PC-9 (cell line): ENCODE measurements at regions of chr21 and their contacts with region 1.

Region 1: GRCh38 chr21:39349211-39350093 is 564 bp upstream of the HMGN1 start:
- DNase-seq: peak; percentile 89 to 96
- H3K4me3 ChIP-seq: peak overlapping the region; percentile 72
- H3K27ac ChIP-seq: peak overlapping the region; percentile 85
- H3K4me1 ChIP-seq: peaks cover 32% of the 10 kb centered on the region
- H3K27me3 ChIP-seq: no peaks in the 10 kb centered on the region
- CTCF ChIP-seq: no peak

Region 2: GRCh38 chr21:39263372-39263771 is 86.1 kb before region 1 on chr21:
- CTCF ChIA-PET with region 1: no interaction called
- POLR2A ChIA-PET with region 1: no interaction called
- intact Hi-C with region 1: no loop called
- DNase-seq: no peak
- H3K4me3 ChIP-seq: no peak overlapping the region
- H3K27ac ChIP-seq: peak overlapping the region; percentile 34; the same call in 1 of the 2 replicates
- H3K4me1 ChIP-seq: no peaks in the 10 kb centered on the region
- H3K27me3 ChIP-seq: no peaks in the 10 kb centered on the region
- CTCF ChIP-seq: no peak

Region 3: DNA sequence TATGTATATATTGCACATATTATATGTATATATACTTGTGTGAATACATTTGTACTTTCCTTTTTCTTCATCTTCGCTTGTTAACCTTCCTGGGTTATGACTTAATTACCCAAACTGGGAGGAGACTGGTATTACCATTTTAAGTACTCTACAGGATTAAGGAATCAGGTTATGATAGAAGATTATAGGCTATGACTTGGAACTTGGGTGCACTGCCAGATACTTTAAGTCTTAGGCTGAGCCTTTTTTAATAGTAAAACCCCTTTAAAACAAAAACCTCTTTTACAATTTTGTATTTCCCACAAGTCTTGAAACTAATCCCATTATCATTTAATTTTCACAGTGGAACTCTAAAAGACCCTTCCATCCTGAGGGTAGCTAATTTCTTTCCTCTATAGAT is 42.0 kb before region 1 on chr21:
- CTCF ChIA-PET with region 1: no interaction called
- POLR2A ChIA-PET with region 1: interaction called, 25 read pairs
- intact Hi-C with region 1: loop called (anchors 1 kb)
- DNase-seq: no peak
- H3K4me3 ChIP-seq: no peak overlapping the region
- H3K27ac ChIP-seq: no peak overlapping the region
- H3K4me1 ChIP-seq: peaks cover 9% of the 10 kb centered on the region
- H3K27me3 ChIP-seq: no peaks in the 10 kb centered on the region
- CTCF ChIP-seq: no peak

Region 4: GRCh38 chr21:39313571-39314142 is 35.8 kb before region 1 on chr21 and contains the start of gene BRWD1:
- CTCF ChIA-PET with region 1: no interaction called
- POLR2A ChIA-PET with region 1: interaction called, 3 read pairs
- intact Hi-C with region 1: loop called (anchors 1 kb)
- DNase-seq: peak; percentile 52 to 67
- H3K4me3 ChIP-seq: peak within 1 kb of the TSS; percentile 81
- H3K27ac ChIP-seq: peak within 1 kb of the TSS; percentile 85
- H3K4me1 ChIP-seq: peaks cover 22% of the 10 kb centered on the region
- H3K27me3 ChIP-seq: no peaks in the 10 kb centered on the region
- CTCF ChIP-seq: no peak; the same call in 1 of the 2 replicates
- total RNA-seq, gene BRWD1: 38.9 and 42.9 TPM in 2 replicates

Region 5: DNA sequence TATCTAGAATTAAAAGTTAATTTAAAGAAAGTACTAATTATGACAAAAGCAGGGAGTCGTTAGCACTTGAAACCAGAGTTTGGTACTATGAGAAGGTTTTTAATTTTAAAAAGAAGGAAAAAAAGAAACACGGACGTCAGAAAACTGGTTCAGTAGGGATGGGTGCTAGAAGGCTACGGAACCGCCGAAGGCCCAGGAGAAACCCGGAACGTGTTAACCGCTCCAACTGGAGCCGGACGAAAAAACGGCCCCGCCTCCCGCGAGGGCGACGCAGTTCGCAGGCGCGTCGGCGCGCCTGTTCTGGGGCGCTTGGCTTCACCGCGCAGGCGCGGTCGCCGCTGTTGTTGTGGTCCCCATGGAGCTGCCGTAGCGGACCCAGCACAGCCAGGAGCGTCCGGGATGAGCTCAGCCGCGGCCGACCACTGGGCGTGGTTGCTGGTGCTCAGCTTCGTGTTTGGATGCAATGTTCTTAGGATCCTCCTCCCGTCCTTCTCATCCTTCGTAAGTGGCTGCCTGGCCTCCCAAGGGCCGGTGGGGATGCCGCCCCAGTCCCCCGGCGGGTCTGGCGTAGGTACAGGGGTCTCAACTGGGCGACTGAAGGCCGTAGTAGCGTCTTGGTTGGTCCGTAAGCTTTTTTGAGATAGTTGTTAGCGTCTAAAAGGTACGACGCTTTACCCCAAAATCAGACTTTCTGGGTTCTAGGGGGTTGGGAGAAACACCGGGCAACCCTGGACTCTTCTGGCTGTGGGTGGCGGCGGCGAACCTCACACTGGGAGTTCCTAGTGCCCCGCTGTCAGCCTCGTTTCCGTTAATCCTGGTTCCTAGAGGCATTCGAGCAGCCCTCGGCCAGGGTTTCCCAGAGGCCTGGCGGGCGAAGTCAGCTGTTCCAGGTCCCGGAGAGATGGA is 30.8 kb after region 1 on chr21:
- CTCF ChIA-PET with region 1: no interaction called
- POLR2A ChIA-PET with region 1: no interaction called
- intact Hi-C with region 1: loop called (anchors 1 kb)
- DNase-seq: peak; percentile 73 to 86
- H3K4me3 ChIP-seq: peak overlapping the region; percentile 82
- H3K27ac ChIP-seq: no peak overlapping the region
- H3K4me1 ChIP-seq: peaks cover 21% of the 10 kb centered on the region
- H3K27me3 ChIP-seq: no peaks in the 10 kb centered on the region
- CTCF ChIP-seq: no peak